Breast epithelium (tissue), 4 donors: ENCODE measurements at regions of chr4 and their contacts with region 1.

Region 1: GRCh38 chr4:169464080-169464479 is 148.3 kb downstream of the NEK1 start:
- DNase-seq: no peak
- H3K4me3 ChIP-seq: no peak overlapping the region
- H3K27ac ChIP-seq: no peak overlapping the region
- H3K4me1 ChIP-seq: no peaks in the 10 kb centered on the region
- H3K27me3 ChIP-seq: no peaks in the 10 kb centered on the region
- CTCF ChIP-seq: no peak
- POLR2A ChIP-seq: no peak

Region 2: GRCh38 chr4:169133932-169134331 is 330.1 kb before region 1 on chr4:
- intact Hi-C with region 1: loop called (anchors 5 kb)
- DNase-seq: peak; percentile 48 to 56
- H3K4me3 ChIP-seq: no peak overlapping the region
- H3K27ac ChIP-seq: peak overlapping the region; percentile 79 to 82
- H3K4me1 ChIP-seq: peaks cover 0 to 7% of the 10 kb centered on the region in 2 donors
- H3K27me3 ChIP-seq: no peaks in the 10 kb centered on the region
- CTCF ChIP-seq: no peak
- POLR2A ChIP-seq: no peak

Region 3: GRCh38 chr4:169362607-169363006 is 101.5 kb before region 1 on chr4:
- intact Hi-C with region 1: no loop called
- DNase-seq: no peak
- H3K4me3 ChIP-seq: no peak overlapping the region
- H3K27ac ChIP-seq: no peak overlapping the region
- H3K4me1 ChIP-seq: no peaks in the 10 kb centered on the region
- H3K27me3 ChIP-seq: no peaks in the 10 kb centered on the region
- CTCF ChIP-seq: no peak
- POLR2A ChIP-seq: no peak

Region 4: DNA sequence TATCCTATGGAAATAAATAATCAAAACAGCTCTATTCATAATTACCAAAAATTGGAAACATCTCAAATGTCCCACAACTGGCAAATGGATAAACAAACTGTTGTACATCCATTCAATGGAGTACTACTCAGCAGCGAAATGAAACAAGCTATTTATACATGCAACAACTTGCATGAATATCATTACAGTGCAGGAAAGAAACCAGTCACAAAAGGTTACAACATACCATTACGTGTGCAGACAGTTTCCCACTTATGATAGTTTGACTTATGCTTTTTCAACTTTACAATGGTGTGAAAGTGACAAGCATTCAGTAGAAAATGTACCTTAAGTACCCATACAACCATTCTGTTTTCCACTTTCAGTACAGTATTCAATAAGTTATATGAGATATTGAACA is 66.0 kb after region 1 on chr4:
- intact Hi-C with region 1: no loop called
- DNase-seq: no peak
- H3K4me3 ChIP-seq: no peak overlapping the region
- H3K27ac ChIP-seq: no peak overlapping the region
- H3K4me1 ChIP-seq: no peaks in the 10 kb centered on the region
- H3K27me3 ChIP-seq: no peaks in the 10 kb centered on the region
- CTCF ChIP-seq: no peak
- POLR2A ChIP-seq: no peak

Region 5: DNA sequence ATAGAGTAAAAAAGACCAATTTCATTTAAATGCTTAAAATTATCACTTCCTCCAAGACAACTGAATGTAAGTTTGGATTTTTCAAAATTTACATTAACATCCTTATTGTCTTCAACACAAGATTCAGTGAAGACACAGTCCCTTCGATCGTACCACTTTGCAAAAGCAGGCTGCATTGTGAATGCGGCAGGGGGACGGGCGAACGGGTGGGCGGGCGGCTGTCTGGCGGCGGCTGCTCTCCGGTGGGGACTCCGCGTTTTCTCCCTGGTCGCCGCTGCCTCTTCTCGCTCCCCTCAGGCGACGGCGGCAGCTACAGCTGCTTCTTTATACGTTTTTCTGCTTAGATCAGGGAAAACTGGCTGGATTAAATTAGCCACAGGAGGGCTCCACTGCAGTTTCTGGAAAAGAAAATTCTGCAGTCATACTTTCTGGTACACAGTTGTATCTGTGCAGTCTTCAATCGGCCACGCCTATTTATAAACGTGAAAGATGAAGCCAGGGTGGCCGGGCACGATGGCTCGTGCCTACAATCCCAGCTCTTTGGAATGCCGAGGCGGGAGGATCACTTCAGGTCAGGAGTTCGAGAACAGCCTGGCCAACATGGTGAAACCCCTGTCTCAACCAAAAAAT is 327.6 kb after region 1 on chr4:
- intact Hi-C with region 1: no loop called
- DNase-seq: no peak
- H3K4me3 ChIP-seq: peak overlapping the region; percentile 16 to 62 (median 32)
- H3K27ac ChIP-seq: no peak overlapping the region
- H3K4me1 ChIP-seq: no peaks in the 10 kb centered on the region
- H3K27me3 ChIP-seq: peaks cover 0 to 22% of the 10 kb centered on the region in 2 donors
- CTCF ChIP-seq: peak in 1 of 3 donors; percentile 21
- POLR2A ChIP-seq: no peak